ENCODE measurements at regions of chr12 and their contacts with region 1.

Region 1: DNA sequence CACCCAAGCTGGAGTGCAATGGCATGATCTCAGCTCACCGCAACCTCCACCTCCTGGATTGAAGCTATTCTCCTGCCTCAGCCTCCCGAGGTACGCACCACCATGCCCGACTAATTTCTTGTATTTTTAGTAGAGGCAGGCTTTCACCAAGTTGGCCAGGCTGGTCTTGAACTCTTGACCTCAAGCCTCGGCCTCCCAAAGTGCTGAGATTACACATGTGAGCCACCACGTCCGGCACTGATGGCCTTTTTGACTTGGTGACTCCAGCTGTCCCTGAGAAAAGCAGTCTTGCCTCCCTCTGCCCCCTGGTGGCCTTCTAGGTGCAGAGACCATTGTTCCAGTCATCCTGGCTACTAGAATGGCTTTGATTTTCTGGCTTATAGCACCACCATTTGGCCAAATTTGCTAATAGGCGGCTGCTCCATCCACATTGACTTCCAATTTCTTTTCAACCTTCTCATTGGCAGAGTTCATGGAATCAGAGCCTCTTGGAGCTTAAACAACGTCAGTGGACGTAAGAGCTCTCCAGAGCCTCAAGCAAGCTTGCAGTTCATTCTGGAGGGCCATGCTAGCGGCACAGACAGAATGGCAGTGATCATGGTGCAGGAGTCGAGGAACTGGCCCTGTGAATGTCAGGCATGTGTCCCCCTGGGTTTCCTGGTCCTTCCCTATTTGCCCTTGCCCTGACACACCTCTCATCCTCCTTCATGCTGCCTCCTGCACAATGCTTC is 25.4 kb upstream of the EIF4B start:
- DNase-seq: no peak
- H3K4me3 ChIP-seq: no peak overlapping the region
- H3K27ac ChIP-seq: no peak overlapping the region
- H3K4me1 ChIP-seq: peaks cover under 1% of the 10 kb centered on the region
- H3K27me3 ChIP-seq: no peaks in the 10 kb centered on the region
- CTCF ChIP-seq: peak; percentile 95 to 99 (median 98)
- POLR2A ChIP-seq: no peak

Region 2: DNA sequence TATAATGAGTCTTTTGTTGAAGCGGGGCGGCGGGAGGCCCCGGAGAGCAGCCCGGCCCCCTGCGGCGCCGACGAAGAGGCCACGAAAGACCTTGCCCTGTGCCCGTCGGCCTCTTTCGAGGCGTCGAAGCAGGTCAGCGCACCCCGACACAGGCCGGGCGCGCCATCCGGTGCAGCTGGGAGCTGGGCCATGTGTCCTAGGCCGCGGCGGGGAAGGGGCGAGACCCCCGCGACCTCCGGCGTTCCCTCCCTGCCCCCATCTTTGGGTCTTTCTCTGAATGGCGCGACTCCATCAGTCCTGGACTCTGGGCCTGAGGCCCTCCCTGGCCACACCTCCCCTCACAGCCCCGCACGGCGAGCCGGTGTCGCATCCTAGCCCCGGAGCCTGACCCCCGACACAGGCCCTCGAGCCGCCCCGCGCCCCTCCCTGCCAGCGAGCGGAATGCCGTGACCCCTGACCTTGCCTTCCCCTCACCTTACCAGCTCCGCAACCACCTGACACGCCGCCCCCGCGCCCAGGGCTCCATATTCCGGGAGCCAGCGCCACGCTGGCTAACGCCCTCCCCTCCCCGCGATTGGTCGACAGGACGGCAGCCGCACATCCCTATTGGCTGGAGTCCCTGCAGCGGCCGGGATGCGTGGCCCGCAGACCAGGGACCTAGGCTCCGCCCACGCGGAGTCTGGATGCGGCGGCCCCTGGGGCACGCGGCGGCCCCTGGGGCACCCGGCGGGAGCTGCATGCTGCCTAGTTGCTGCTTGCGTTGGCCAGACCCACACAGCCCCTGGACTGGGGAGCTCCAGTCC is 1954.8 kb before region 1 on chr12 and contains the start of gene SLC11A2:
- intact Hi-C with region 1: loop called (anchors 10 kb)
- DNase-seq: peak in 1 of 2 donors; percentile 95
- H3K4me3 ChIP-seq: peak within 1 kb of the TSS; percentile 65 to 80
- H3K27ac ChIP-seq: peak within 1 kb of the TSS; percentile 93
- H3K4me1 ChIP-seq: peaks cover 32% of the 10 kb centered on the region
- H3K27me3 ChIP-seq: no peaks in the 10 kb centered on the region
- CTCF ChIP-seq: no peak
- POLR2A ChIP-seq: peak; percentile 26 to 58
- total RNA-seq, gene SLC11A2: 40.8 TPM

Region 3: DNA sequence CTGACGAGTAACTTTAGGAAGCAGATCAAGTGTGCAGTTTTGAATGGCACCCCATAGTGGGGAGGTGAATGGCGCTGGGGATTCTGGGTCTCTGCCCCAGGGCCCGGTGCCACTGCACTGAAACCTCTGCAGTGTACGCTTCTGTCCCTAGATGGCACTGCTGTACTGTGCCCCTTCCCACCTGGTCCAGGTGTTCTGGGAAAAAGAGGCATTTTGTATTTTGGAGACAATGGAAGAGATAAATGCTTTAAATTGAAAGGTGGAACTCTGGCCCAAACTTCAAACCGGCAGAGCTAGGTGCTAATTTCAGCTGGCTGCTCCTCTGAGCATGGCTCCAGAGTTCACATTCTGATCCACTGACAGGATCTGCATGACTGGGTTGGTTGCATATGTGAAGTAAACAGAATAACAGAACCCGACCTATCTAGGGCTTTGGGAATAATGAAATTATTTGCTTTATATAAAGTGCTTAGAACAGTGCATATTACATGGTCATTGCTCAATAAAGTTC is 841.3 kb before region 1 on chr12:
- intact Hi-C with region 1: loop called (anchors 10 kb)
- DNase-seq: no peak
- H3K4me3 ChIP-seq: no peak overlapping the region
- H3K27ac ChIP-seq: no peak overlapping the region
- H3K4me1 ChIP-seq: peaks cover 15% of the 10 kb centered on the region
- H3K27me3 ChIP-seq: no peaks in the 10 kb centered on the region
- CTCF ChIP-seq: peak in 2 of 3 experiments; percentile 17 to 27
- POLR2A ChIP-seq: no peak

Region 4: GRCh38 chr12:52884526-52885293 is 96.1 kb before region 1 on chr12:
- intact Hi-C with region 1: loop called (anchors 5 kb)
- DNase-seq: no peak
- H3K4me3 ChIP-seq: no peak overlapping the region
- H3K27ac ChIP-seq: no peak overlapping the region
- H3K4me1 ChIP-seq: peaks cover 6% of the 10 kb centered on the region
- H3K27me3 ChIP-seq: no peaks in the 10 kb centered on the region
- CTCF ChIP-seq: peak; percentile 89 to 94 (median 94)
- POLR2A ChIP-seq: no peak

Region 5: DNA sequence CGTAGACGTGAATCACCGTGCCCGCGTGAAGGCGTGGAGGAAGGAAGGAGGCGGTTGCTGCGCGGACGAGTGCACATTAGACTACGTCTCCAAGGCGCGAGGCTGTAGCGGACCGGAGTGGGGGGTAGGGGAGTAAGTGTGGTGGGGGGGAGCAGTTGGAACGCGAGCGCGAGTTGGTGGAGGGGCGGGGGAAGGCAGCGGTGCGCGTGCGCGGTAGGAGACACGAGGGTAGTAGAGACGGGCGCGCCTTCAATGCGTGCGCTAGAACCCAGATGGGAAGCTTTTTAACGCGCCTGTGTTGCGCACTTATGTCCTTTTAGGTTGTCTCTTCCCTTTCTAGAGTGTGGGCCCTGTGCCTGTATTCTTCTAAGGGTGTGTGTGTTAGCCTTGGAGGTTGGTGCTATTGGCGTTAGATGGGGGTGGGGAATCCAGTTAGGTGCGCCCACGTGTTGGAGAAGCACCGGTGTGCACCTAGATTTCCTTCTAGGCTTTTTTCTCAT is 26.0 kb after region 1 on chr12:
- intact Hi-C with region 1: no loop called
- DNase-seq: no peak
- H3K4me3 ChIP-seq: peak overlapping the region; percentile 63 to 94
- H3K27ac ChIP-seq: peak overlapping the region; percentile 97
- H3K4me1 ChIP-seq: peaks cover 65% of the 10 kb centered on the region
- H3K27me3 ChIP-seq: no peaks in the 10 kb centered on the region
- CTCF ChIP-seq: no peak
- POLR2A ChIP-seq: no peak

Region 6: DNA sequence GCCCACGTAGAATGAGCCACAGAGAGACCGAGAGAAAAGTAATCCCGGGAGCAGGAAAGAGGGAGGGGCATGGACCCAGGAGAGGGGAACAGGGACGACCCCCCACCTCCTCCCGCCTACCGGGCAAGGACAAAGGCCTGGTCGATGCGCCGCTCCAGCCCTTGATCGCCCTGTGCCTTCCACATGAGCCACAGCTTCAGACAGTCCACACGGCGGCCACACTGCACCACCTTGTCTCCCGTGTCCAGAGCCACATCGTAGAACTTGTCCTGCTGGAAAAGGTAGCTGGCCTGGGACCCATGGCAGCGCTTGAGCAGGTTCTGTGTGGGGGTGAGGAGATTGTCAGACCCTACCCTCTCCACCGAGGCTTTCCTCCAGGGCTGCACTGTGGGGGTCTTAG is 179.1 kb after region 1 on chr12:
- intact Hi-C with region 1: no loop called
- DNase-seq: no peak
- H3K4me3 ChIP-seq: no peak overlapping the region
- H3K27ac ChIP-seq: no peak overlapping the region
- H3K4me1 ChIP-seq: no peaks in the 10 kb centered on the region
- H3K27me3 ChIP-seq: no peaks in the 10 kb centered on the region
- CTCF ChIP-seq: no peak
- POLR2A ChIP-seq: no peak

Measured in vagina (tissue), 2 donors.